Heart right ventricle (tissue), 16 donors: ENCODE measurements at regions of chr1 and their contacts with region 1.

Region 1: GRCh38 chr1:198880818-198881597 is 242.2 kb downstream of the PTPRC start:
- DNase-seq: no peak
- ATAC-seq: peak in 1 of 8 donors; percentile 87
- H3K4me3 ChIP-seq: no peak overlapping the region
- H3K27ac ChIP-seq: peak overlapping the region in 1 of 10 donors; percentile 16
- H3K4me1 ChIP-seq: peaks cover 0 to 18% (median 0%) of the 10 kb centered on the region in 9 donors
- H3K27me3 ChIP-seq: no peaks in the 10 kb centered on the region
- CTCF ChIP-seq: no peak

Region 2: DNA sequence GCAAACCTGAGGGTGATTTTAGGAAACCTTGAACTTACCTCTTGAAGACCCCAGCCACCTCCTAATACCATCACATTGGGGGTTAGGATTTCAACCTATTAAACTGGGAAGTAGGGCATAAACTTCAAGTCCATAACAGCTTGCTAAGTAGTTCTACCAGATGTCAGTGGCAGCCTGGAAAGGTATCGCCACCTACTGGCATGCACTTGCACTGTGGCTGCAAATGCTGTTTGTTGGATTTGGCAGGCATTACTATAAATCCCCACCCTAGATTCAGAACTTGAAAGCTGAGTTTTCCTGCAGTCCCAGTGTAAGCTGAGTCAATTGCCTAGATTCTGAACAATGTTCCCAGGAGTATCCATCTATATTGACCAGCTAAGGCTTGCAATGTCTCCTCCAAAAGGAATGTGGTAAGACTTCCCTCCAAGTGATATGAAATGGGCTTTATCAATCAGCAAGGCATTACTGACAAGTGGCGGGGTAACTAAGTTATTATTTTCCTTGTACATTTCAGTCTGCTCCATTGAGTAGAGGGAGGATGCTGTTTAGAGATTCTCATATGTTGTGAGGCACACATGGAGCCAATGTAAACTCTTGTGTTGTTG is 232.4 kb after region 1 on chr1:
- intact Hi-C with region 1: loop called in 1 of 10 experiments (anchors 10 kb)
- DNase-seq: peak; percentile 29 to 33
- ATAC-seq: peak in 2 of 8 donors; percentile 33 to 42
- H3K4me3 ChIP-seq: no peak overlapping the region
- H3K27ac ChIP-seq: no peak overlapping the region
- H3K4me1 ChIP-seq: no peaks in the 10 kb centered on the region
- H3K27me3 ChIP-seq: no peaks in the 10 kb centered on the region
- CTCF ChIP-seq: peak; percentile 45 to 76 (median 65)